ENCODE measurements at regions of chr14 and their contacts with region 1.

Region 1: DNA sequence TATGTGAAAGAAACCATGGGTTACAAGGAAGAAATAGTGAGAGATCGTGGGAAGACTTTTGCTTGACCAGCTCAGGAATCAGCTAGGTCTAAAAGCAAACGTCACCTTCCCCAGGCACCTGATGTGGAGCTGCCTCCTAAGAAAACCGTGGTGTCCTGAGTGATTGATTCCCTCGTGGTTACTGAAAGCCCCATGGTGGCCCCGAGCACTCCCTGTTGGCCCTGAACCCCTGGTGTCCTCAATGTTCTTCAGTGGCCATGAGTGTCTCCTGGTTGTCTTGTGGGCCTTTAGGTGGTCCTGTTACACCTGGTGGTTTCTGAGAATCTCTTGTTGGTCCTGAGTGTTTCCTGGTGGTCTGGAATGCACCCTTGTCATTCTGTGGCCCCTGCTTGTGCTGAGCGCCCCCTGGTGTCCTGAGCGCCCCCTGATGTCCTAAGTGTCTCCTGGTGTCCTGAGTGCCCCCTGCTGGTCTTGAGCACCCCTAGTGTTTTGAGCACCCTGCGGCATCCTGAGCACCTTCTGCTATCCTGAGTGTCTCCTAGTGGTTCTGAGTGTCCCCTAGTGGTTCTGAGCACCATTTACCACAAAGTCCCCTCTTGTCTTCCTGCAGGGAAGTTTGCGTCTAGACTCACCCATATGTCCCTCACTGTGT is 518.7 kb downstream of the TMEM121 start:
- DNase-seq: peak; percentile 40
- H3K4me3 ChIP-seq: no peak overlapping the region
- H3K27ac ChIP-seq: no peak overlapping the region
- H3K4me1 ChIP-seq: no peaks in the 10 kb centered on the region
- H3K27me3 ChIP-seq: no peaks in the 10 kb centered on the region

Region 2: DNA sequence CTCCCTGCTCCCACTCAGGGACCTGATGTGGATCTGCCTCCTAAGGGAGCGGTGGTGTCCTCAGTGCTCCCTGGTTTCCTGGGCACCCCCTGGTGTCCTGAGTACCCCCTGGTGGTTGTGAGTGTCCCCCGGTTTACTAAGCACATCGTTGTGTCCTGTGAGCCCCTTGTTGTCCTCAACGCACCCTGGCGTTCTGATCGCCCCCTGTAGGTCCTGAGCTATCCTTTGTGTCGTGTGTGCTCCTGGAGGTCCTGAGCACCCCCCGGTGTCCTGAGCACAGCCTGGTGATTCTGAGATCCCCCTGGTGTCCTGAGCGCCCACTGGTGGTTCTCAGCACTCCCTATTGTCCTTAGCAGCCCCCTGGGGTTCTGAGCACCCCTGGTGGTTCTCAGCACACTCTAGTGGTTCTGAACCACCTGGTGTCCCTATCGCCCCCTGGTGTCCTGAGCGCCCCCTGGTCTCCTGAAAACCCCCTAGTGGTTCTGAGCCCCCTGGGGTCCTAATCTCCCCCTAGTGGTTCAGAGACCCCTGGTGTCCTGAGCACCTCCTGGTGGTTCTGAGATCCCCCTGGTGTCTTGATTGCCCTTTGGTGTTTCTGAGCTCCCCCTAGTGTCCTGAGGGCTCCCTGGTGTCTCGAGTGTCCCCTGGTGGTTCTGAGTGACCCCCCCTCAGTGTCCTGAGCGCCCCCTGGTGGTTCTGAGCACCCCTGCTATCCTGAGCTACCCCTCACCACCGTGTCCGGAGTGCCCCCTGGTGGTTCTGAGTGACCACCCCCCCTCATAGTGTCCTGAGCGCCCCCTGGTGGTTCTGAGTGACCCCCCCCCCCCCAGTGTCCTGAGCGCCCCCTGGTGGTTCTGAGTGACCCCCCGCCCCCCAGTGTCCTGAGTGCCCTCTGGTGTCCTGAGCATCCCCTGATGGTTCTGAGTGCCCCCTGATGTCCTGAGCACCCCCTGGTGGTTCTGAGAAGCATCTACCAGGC is 96.5 kb after region 1 on chr14:
- in situ Hi-C with region 1: loop called (anchors 25 kb)
- DNase-seq: no peak
- H3K4me3 ChIP-seq: no peak overlapping the region
- H3K27ac ChIP-seq: no peak overlapping the region
- H3K4me1 ChIP-seq: no peaks in the 10 kb centered on the region
- H3K27me3 ChIP-seq: no peaks in the 10 kb centered on the region

Measured in GM23248 (cell line).